ENCODE measurements at regions of chr2 and their contacts with region 1.

Region 1: GRCh38 chr2:200735061-200735460 is 76.6 kb upstream of the BZW1 start:
- H3K4me3 ChIP-seq: no peak overlapping the region
- H3K27ac ChIP-seq: no peak overlapping the region
- H3K4me1 ChIP-seq: peaks cover 5% of the 10 kb centered on the region; the same call in 1 of the 2 replicates
- CTCF ChIP-seq: no peak

Region 2: GRCh38 chr2:199979832-199980628 is 755.0 kb before region 1 on chr2:
- CTCF ChIA-PET with region 1: interaction called, 10 read pairs
- POLR2A ChIA-PET with region 1: no interaction called
- H3K4me3 ChIP-seq: no peak overlapping the region
- H3K27ac ChIP-seq: no peak overlapping the region
- H3K4me1 ChIP-seq: no peaks in the 10 kb centered on the region; the same call in 1 of the 2 replicates
- CTCF ChIP-seq: peak; percentile 69

Region 3: DNA sequence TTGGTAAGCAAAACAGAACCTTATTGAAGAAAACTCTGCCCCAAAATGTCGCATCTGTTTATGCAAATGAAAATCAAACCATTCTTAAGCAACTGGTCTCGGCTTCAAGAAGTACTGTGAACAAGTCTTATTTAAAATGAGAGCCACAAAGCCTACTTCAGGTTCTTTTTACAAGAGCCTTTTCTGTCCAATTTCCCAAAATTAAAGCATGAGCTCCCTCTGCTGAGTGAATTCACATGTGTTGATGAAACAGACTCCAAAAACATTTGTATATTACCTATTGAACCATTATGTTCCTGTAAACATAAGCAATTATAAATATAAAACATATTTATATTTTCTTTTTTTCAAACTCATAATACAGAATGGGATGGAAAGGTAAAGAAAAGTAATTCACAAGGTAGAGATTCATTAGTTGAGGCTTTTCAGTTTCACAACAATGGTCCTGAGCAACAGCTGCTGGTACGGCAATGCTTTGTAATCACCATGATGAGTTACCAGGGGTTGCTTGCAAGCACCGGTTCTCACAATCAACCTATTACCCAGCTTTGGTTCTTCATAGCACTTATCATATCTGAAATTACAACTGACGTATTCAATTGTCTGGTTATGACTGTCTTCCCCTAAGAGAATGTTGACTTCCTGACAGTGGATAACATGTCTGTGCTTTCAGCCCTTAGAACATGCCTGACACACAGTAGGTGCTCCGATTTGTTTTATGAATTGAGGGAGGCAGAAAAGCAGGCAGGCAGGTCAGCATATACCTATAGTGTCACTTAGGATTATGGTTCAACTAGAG is 31.7 kb before region 1 on chr2:
- CTCF ChIA-PET with region 1: interaction called, 44 read pairs
- POLR2A ChIA-PET with region 1: no interaction called
- H3K4me3 ChIP-seq: no peak overlapping the region
- H3K27ac ChIP-seq: no peak overlapping the region
- H3K4me1 ChIP-seq: peaks cover 2% of the 10 kb centered on the region; the same call in 1 of the 2 replicates
- CTCF ChIP-seq: 0 out of 2 replicates have a peak, but pooled peaks have one; percentile 18

Region 4: DNA sequence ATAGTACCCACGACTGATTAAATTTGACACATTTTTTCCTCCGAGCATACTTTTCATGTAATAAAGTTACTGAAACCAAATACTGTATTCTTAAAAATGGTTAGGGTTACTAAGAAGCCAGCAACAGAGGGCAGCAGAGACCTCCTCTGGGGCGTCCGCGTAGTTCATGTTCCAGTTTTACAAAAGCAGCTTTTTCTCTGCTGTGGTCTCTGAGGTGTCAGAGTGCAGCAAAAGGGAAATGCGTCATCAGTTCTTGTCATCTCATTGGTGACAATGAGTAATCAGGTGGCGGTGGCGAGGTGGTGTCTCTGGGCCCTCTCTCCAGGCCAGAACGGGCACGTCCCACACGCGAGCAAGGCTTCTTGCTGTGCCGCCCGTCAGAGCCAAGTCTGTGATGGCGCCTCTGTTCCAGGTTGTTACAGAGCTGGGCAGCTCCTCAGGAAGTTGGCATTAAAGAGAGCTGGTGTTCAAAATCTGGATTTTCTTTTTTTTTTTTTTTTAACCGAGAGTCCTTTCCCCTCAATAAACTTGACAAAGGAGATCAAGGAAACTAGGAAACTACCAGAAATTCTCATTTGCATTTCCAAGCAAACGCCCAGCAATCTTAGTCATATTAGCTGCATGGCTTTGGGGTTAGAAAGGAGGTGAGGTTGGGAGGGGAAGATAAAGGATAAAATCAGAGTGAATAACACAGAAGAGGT is 21.9 kb before region 1 on chr2:
- CTCF ChIA-PET with region 1: interaction called, 65 read pairs
- POLR2A ChIA-PET with region 1: no interaction called
- H3K4me3 ChIP-seq: peak overlapping the region; percentile 25
- H3K27ac ChIP-seq: peak overlapping the region; percentile 2; the same call in 1 of the 2 replicates
- H3K4me1 ChIP-seq: no peaks in the 10 kb centered on the region
- CTCF ChIP-seq: peak; percentile 76

Region 5: GRCh38 chr2:200747668-200748618 is 12.9 kb after region 1 on chr2:
- CTCF ChIA-PET with region 1: interaction called, 10 read pairs
- POLR2A ChIA-PET with region 1: no interaction called
- H3K4me3 ChIP-seq: no peak overlapping the region
- H3K27ac ChIP-seq: peak overlapping the region; percentile 66
- H3K4me1 ChIP-seq: peaks cover 13% of the 10 kb centered on the region
- CTCF ChIP-seq: no peak

Region 6: GRCh38 chr2:200860092-200860795 is 125.2 kb after region 1 on chr2:
- CTCF ChIA-PET with region 1: no interaction called
- POLR2A ChIA-PET with region 1: no interaction called
- H3K4me3 ChIP-seq: no peak overlapping the region; the same call in 1 of the 2 replicates
- H3K27ac ChIP-seq: no peak overlapping the region
- H3K4me1 ChIP-seq: 0 out of 2 replicates have a peak, but pooled peaks cover 10% of the 10 kb centered on the region
- CTCF ChIP-seq: no peak